CD4-positive, alpha-beta T cell (primary cell): ENCODE measurements at regions of chr1 and their contacts with region 1.

Region 1: GRCh38 chr1:41914516-41914915 is 4.2 kb downstream of the HIVEP3 start:
- DNase-seq: peak in 4 of 14 experiments; percentile 42 to 78 (median 70)
- ATAC-seq: peak; percentile 68
- H3K4me3 ChIP-seq: no peak overlapping the region
- H3K4me3 Mint-ChIP-seq: peak overlapping the region; percentile 49
- H3K27ac ChIP-seq: peak overlapping the region in 1 of 2 donors; percentile 51
- H3K27ac Mint-ChIP-seq: peak overlapping the region; percentile 95
- H3K4me1 ChIP-seq: peaks cover 64% of the 10 kb centered on the region
- H3K4me1 Mint-ChIP-seq: peaks cover 78% of the 10 kb centered on the region
- H3K27me3 ChIP-seq: no peaks in the 10 kb centered on the region
- H3K27me3 Mint-ChIP-seq: no peaks in the 10 kb centered on the region
- CTCF ChIP-seq: no peak

Region 2: GRCh38 chr1:41898191-41898713 is 16.3 kb before region 1 on chr1:
- CTCF ChIA-PET with region 1: interaction called, 3 read pairs
- POLR2A ChIA-PET with region 1: interaction called, 108 read pairs
- intact Hi-C with region 1: loop called in 1 of 2 experiments (anchors 1 kb)
- DNase-seq: peak; percentile 50 to 95 (median 74)
- ATAC-seq: peak; percentile 96
- H3K4me3 ChIP-seq: peak overlapping the region; percentile 27
- H3K4me3 Mint-ChIP-seq: peak overlapping the region; percentile 78
- H3K27ac ChIP-seq: peak overlapping the region; percentile 59 to 78
- H3K27ac Mint-ChIP-seq: peak overlapping the region; percentile 98
- H3K4me1 ChIP-seq: peaks cover 98% of the 10 kb centered on the region
- H3K4me1 Mint-ChIP-seq: peaks cover 91% of the 10 kb centered on the region
- H3K27me3 ChIP-seq: no peaks in the 10 kb centered on the region
- H3K27me3 Mint-ChIP-seq: no peaks in the 10 kb centered on the region
- CTCF ChIP-seq: no peak